ENCODE measurements at regions of chr1 and their contacts with region 1.

Region 1: GRCh38 chr1:160006312-160006940 is 25.4 kb downstream of the PIGM start:
- DNase-seq: peak; percentile 86
- ATAC-seq: peak; percentile 95
- H3K4me3 Mint-ChIP-seq: no peak overlapping the region
- H3K27ac Mint-ChIP-seq: no peak overlapping the region
- H3K4me1 Mint-ChIP-seq: no peaks in the 10 kb centered on the region
- H3K27me3 Mint-ChIP-seq: peaks cover 8% of the 10 kb centered on the region; the same call in 1 of the 2 replicates
- CTCF ChIP-seq: peak; percentile 93

Region 2: GRCh38 chr1:159719990-159720389 is 286.4 kb before region 1 on chr1:
- CTCF ChIA-PET with region 1: no interaction called
- POLR2A ChIA-PET with region 1: no interaction called
- DNase-seq: no peak
- ATAC-seq: no peak
- H3K4me3 Mint-ChIP-seq: no peak overlapping the region
- H3K27ac Mint-ChIP-seq: no peak overlapping the region
- H3K4me1 Mint-ChIP-seq: no peaks in the 10 kb centered on the region
- H3K27me3 Mint-ChIP-seq: peaks cover 5% of the 10 kb centered on the region; the same call in 1 of the 2 replicates
- CTCF ChIP-seq: no peak

Region 3: DNA sequence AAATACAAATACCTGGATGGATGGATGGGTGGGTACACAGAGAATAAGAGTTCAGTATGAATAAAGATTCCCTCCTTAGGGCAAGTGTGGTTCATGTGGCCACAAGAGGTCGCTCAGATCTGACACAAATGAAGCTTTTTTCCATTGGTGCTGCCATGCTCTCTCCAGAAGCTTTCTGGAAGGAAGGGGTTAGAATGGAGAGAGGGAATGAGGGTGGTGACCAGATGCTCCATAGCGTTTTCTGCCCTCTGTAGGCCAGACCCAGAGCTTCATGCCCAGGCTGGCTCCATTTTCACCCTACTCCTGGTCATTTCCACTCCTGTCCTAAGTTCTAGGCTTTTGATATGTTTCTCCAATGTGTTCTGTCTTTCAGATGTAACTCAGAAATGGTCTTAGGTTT is 207.5 kb before region 1 on chr1:
- CTCF ChIA-PET with region 1: interaction called, 77 read pairs
- POLR2A ChIA-PET with region 1: no interaction called
- DNase-seq: peak; percentile 66
- ATAC-seq: peak; percentile 99
- H3K4me3 Mint-ChIP-seq: no peak overlapping the region
- H3K27ac Mint-ChIP-seq: no peak overlapping the region
- H3K4me1 Mint-ChIP-seq: no peaks in the 10 kb centered on the region
- H3K27me3 Mint-ChIP-seq: peaks cover 3% of the 10 kb centered on the region
- CTCF ChIP-seq: peak; percentile 48

Region 4: GRCh38 chr1:159854693-159855192 is 151.7 kb before region 1 on chr1:
- CTCF ChIA-PET with region 1: interaction called, 13 read pairs
- POLR2A ChIA-PET with region 1: no interaction called
- DNase-seq: peak; percentile 68
- ATAC-seq: peak; percentile 83
- H3K4me3 Mint-ChIP-seq: peak overlapping the region; percentile 87
- H3K27ac Mint-ChIP-seq: no peak overlapping the region
- H3K4me1 Mint-ChIP-seq: peaks cover 6% of the 10 kb centered on the region
- H3K27me3 Mint-ChIP-seq: peaks cover 46% of the 10 kb centered on the region
- CTCF ChIP-seq: no peak

Region 5: GRCh38 chr1:159924981-159925712 is 81.3 kb before region 1 on chr1 and contains the start of gene TAGLN2:
- CTCF ChIA-PET with region 1: interaction called, 64 read pairs
- POLR2A ChIA-PET with region 1: interaction called, 3 read pairs
- DNase-seq: peak; percentile 88
- ATAC-seq: peak; percentile 80
- H3K4me3 Mint-ChIP-seq: peak within 1 kb of the TSS; percentile 85
- H3K27ac Mint-ChIP-seq: no peak within 1 kb of the TSS
- H3K4me1 Mint-ChIP-seq: peaks cover 37% of the 10 kb centered on the region
- H3K27me3 Mint-ChIP-seq: peaks cover 18% of the 10 kb centered on the region
- CTCF ChIP-seq: no peak
- total RNA-seq, gene TAGLN2: 66.9 to 75.3 TPM (median 73.3 TPM) in 3 replicates

Region 6: DNA sequence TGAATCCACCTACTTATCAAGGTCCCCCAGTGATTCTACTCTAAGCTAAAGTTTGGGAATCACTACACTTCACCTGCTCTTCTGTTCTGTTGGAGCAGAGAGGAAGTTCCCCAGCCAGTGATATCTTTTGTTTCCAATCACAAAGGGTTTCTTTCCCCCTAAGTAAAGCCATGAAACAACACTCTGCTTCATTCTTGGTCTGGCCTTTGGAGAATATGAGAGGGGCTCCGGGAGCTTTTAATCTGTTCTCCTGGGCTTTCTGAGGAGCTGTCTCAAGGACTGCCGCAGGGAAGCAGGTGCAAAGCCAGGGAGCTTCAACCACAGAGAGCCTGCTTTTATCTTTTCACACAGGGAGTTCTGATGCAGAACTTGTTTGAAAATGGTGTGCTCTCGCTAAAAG is 42.3 kb before region 1 on chr1:
- CTCF ChIA-PET with region 1: interaction called, 15 read pairs
- POLR2A ChIA-PET with region 1: no interaction called
- DNase-seq: no peak
- ATAC-seq: peak; percentile 55
- H3K4me3 Mint-ChIP-seq: no peak overlapping the region
- H3K27ac Mint-ChIP-seq: no peak overlapping the region
- H3K4me1 Mint-ChIP-seq: peaks cover 11% of the 10 kb centered on the region
- H3K27me3 Mint-ChIP-seq: peaks cover 2% of the 10 kb centered on the region
- CTCF ChIP-seq: no peak

Region 7: GRCh38 chr1:160046494-160047110 is 40.2 kb after region 1 on chr1:
- CTCF ChIA-PET with region 1: interaction called, 14 read pairs
- POLR2A ChIA-PET with region 1: no interaction called
- DNase-seq: peak; percentile 61
- ATAC-seq: peak; percentile 88
- H3K4me3 Mint-ChIP-seq: peak overlapping the region; percentile 26; the same call in 1 of the 2 replicates
- H3K27ac Mint-ChIP-seq: no peak overlapping the region
- H3K4me1 Mint-ChIP-seq: peaks cover 30% of the 10 kb centered on the region
- H3K27me3 Mint-ChIP-seq: peaks cover 7% of the 10 kb centered on the region
- CTCF ChIP-seq: peak; percentile 57; the same call in 1 of the 2 replicates

Region 8: DNA sequence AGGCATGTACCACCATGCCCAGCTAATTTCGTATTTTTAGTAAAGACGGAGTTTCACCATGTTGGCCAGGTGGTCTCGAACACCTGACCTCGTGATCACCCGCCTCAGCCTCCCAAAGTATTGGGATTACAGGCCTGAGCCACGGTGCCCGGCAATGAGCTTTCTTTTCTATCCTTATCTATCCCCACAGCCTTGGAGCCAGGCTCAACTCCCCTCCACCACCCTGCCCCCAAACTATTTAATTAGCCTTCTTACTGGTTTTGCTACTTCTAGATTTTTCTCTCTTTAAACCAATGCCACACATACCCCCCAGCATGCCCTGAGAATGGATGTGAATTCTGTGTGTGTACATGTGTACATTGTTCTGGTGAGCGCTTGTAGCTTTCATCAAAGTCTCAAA is 388.2 kb after region 1 on chr1:
- CTCF ChIA-PET with region 1: no interaction called
- POLR2A ChIA-PET with region 1: no interaction called
- DNase-seq: no peak
- ATAC-seq: no peak
- H3K4me3 Mint-ChIP-seq: no peak overlapping the region
- H3K27ac Mint-ChIP-seq: no peak overlapping the region
- H3K4me1 Mint-ChIP-seq: peaks cover 16% of the 10 kb centered on the region
- H3K27me3 Mint-ChIP-seq: peaks cover 2% of the 10 kb centered on the region; the same call in 1 of the 2 replicates
- CTCF ChIP-seq: no peak